HEK293 (cell line): ENCODE measurements at regions of chr17 and their contacts with region 1.

Region 1: GRCh38 chr17:44919885-44920564 is 4.7 kb upstream of the GFAP start:
- H3K4me3 ChIP-seq: no peak overlapping the region
- H3K27ac ChIP-seq: no peak overlapping the region
- H3K4me1 ChIP-seq: no peaks in the 10 kb centered on the region; the same call in 1 of the 2 replicates
- CTCF ChIP-seq: peak; percentile 87

Region 2: GRCh38 chr17:44775136-44775837 is 144.7 kb before region 1 on chr17:
- CTCF ChIA-PET with region 1: interaction called, 17 read pairs
- POLR2A ChIA-PET with region 1: no interaction called
- H3K4me3 ChIP-seq: peak overlapping the region; percentile 58
- H3K27ac ChIP-seq: peak overlapping the region; percentile 25; the same call in 1 of the 2 replicates
- H3K4me1 ChIP-seq: no peaks in the 10 kb centered on the region
- CTCF ChIP-seq: peak; percentile 36; the same call in 1 of the 2 replicates

Region 3: GRCh38 chr17:44829523-44830358 is 90.3 kb before region 1 on chr17 and contains the start of gene GJC1:
- CTCF ChIA-PET with region 1: no interaction called
- POLR2A ChIA-PET with region 1: no interaction called
- H3K4me3 ChIP-seq: peak within 1 kb of the TSS; percentile 78
- H3K27ac ChIP-seq: peak within 1 kb of the TSS; percentile 93
- H3K4me1 ChIP-seq: peaks cover 14% of the 10 kb centered on the region
- CTCF ChIP-seq: no peak

Region 4: GRCh38 chr17:44872131-44872768 is 47.8 kb before region 1 on chr17:
- CTCF ChIA-PET with region 1: no interaction called
- POLR2A ChIA-PET with region 1: no interaction called
- H3K4me3 ChIP-seq: no peak overlapping the region
- H3K27ac ChIP-seq: no peak overlapping the region
- H3K4me1 ChIP-seq: no peaks in the 10 kb centered on the region
- CTCF ChIP-seq: no peak

Region 5: DNA sequence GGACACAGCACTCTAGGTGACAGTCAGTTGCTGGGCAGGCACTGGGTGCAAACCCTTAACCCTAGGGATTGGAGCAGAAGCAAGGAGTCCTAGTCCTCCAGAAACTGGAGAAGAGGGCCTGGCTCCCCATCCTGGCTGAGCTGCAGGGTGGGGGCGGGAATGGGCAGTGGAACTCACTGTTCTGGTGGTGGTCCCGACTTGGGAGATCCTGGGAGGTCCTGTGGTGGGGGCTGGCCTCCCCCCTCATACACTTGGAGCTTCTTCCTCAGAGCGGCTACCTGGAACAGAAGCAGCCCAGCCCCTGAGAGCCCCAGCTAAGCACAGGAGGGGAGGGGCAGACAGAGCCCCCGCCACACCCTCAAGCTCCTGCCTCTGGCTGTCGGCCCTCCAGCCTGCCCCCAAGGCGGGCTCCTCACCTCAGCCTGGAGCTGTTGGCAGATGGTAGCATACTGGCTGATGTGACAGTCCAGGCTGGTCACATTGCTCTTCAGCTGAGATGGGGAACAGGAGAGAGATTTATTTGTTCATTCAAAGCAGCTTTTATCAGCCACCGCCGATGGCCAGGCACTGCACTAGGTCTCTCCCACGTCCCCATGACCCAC is 12.6 kb after region 1 on chr17:
- CTCF ChIA-PET with region 1: interaction called, 41 read pairs
- POLR2A ChIA-PET with region 1: interaction called, 3 read pairs
- H3K4me3 ChIP-seq: no peak overlapping the region
- H3K27ac ChIP-seq: no peak overlapping the region
- H3K4me1 ChIP-seq: no peaks in the 10 kb centered on the region
- CTCF ChIP-seq: no peak

Region 6: DNA sequence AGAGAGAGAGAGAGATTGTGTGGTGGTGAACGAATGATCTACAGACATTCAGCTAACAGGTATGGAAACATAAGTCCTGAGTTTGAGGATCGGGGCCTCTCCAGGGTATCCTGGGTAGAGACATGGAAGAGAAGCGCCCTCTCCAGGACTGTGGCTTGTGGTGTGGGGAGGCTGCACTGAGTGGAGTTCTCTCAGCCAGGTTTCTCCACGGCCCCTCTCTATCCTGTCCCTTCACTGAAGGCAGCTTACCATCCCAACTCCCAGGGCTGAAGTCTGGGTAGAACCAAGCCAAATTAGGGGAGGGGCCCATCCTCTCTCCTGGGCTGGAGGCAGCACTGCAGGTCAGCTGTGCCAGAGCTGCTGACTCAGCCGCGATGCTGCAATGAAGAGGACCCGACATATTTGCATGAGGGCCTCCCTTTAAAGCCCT is 41.9 kb after region 1 on chr17:
- CTCF ChIA-PET with region 1: interaction called, 23 read pairs
- POLR2A ChIA-PET with region 1: interaction called, 8 read pairs
- H3K4me3 ChIP-seq: no peak overlapping the region
- H3K27ac ChIP-seq: no peak overlapping the region
- H3K4me1 ChIP-seq: 0 out of 2 replicates have a peak, but pooled peaks cover 3% of the 10 kb centered on the region
- CTCF ChIP-seq: no peak

Region 7: DNA sequence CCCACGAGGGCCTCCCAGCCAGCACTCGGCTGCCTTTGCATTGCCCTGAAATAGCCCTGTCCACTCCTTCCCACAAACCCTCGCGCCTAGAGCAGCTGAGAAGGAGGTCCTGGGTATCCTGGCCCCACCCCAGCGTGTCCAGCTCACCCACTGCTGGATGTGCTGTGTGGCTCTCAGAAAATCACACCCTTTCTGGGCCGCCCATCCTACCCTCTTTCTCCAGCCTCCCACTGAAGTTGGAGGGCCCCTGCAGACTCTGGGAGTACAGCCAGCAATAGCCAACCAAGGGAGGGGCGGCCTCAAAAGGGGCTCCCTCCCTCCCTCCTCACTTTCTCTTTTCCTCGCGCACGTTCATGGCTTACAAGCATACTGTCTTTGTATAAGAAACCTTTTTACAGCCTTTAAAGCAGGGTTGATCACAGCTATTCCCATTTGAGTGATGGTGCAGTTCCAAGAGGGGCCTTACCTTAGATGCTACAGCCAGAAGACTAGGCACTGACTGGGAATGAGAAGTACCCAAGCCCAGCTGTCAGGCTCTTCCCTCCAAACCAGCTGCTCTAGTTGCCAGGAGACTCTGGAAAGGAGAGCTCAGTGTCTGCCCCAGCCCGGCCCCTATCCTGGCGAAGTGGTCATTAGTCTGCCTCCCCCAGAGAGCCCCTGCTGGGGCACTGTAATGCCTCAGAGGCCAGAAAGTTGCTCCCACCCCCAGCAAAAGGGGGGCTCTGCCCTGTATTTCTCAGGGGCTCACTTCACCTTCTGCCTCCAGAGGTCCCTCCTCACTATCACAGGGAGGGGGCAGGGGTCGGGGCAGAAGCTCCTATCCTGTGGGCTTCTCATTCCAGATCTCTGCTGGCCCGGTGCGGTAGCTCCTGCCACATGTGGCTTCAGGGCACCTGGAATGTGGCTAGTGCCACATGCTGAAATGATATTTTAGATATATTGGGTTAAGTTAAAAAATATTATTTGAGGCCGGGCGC is 93.3 kb after region 1 on chr17:
- CTCF ChIA-PET with region 1: interaction called, 296 read pairs
- POLR2A ChIA-PET with region 1: no interaction called
- H3K4me3 ChIP-seq: no peak overlapping the region
- H3K27ac ChIP-seq: no peak overlapping the region
- H3K4me1 ChIP-seq: no peaks in the 10 kb centered on the region
- CTCF ChIP-seq: no peak

Region 8: DNA sequence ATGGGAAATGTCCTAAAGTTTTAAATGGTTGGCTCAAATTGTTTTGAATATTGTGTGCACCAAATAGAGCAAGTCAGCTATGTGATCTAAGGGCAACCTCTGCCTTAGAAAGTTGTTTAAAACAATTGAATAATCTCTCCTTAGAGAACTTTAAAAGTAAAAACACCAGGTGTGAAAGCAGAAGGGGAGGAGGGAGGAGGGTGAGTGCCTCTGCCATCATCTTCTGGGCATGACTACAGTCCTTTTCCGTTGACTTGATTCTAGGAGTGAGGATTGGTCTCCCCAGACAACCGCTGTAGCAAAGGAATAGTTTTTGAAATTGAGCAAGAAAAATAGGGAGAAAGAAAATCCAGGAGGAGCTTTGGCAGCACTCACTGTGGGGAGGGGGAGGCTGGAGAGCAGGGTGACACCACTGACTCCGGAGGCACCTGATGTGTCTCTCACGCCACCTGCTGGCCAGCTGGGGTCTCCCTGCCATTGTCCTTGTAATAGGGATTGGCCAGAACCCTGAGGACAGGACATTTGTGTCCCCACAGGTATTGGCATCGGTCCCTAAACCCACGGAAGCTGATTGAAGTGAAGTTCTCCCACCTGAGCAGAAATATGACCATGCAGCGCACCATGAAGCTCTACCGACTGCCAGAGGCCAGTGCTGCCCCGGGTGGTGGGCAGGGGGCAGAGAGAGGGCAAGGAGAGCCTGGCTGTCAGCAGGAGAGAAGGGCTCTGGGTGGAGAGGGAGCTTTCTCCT is 179.0 kb after region 1 on chr17:
- CTCF ChIA-PET with region 1: interaction called, 44 read pairs
- POLR2A ChIA-PET with region 1: no interaction called
- H3K4me3 ChIP-seq: no peak overlapping the region
- H3K27ac ChIP-seq: no peak overlapping the region
- H3K4me1 ChIP-seq: no peaks in the 10 kb centered on the region
- CTCF ChIP-seq: peak; percentile 88

Region 9: GRCh38 chr17:46072998-46073397 is 1153.0 kb after region 1 on chr17:
- CTCF ChIA-PET with region 1: no interaction called
- POLR2A ChIA-PET with region 1: no interaction called
- H3K4me3 ChIP-seq: no peak overlapping the region
- H3K27ac ChIP-seq: no peak overlapping the region
- H3K4me1 ChIP-seq: peaks cover 5% of the 10 kb centered on the region; the same call in 1 of the 2 replicates
- CTCF ChIP-seq: no peak